ENCODE measurements at regions of chr1 and their contacts with region 1.

Region 1: DNA sequence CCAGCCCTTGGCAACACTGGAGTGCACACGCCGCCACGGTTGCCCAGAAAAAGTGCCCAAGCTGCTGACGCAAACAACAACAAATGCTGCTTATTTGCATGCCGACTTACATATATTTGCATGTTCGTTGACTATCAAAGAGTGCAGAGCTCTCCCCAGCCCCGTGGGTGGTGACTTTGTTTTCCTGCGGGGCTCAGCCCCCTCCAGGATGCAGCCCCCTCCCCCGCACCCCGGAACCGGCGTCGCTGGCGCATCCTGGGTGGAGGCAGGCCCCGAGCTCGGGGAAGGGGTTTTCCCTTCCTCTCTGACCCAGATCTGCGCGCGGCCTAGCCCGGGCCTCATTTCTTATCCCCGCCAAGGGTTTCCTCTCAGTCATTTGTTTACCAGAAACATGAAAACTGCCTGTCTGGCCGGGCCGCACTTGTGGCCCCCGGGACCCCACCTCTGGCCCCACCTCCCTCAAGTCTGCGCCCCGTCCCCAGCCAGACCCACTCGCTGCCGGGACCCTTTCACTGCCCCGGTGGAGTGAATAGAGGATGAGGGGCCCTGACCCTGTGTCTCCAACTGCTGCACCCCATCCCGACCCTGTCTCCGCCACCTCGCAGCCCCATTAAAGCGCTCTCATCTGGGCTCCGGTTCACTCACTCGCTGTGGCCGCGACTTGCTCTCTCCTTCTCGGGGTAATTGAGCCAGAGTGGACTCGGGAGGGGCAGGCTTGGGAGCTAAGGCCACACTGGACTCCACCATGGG is 5.5 kb downstream of the TNFRSF25 start:
- DNase-seq: peak; percentile 90
- H3K4me3 Mint-ChIP-seq: peak overlapping the region; percentile 74
- H3K27ac Mint-ChIP-seq: peak overlapping the region; percentile 92
- H3K4me1 Mint-ChIP-seq: peaks cover 51% of the 10 kb centered on the region
- H3K27me3 Mint-ChIP-seq: peaks cover 19% of the 10 kb centered on the region

Region 2: GRCh38 chr1:6059866-6060265 is 400.6 kb before region 1 on chr1:
- CTCF ChIA-PET with region 1: no interaction called
- POLR2A ChIA-PET with region 1: no interaction called
- DNase-seq: no peak
- H3K4me3 Mint-ChIP-seq: no peak overlapping the region
- H3K27ac Mint-ChIP-seq: no peak overlapping the region
- H3K4me1 Mint-ChIP-seq: peaks cover 2% of the 10 kb centered on the region
- H3K27me3 Mint-ChIP-seq: no peaks in the 10 kb centered on the region

Region 3: GRCh38 chr1:6300342-6301048 is 160.0 kb before region 1 on chr1:
- CTCF ChIA-PET with region 1: no interaction called
- POLR2A ChIA-PET with region 1: no interaction called
- DNase-seq: no peak
- H3K4me3 Mint-ChIP-seq: no peak overlapping the region
- H3K27ac Mint-ChIP-seq: no peak overlapping the region
- H3K4me1 Mint-ChIP-seq: no peaks in the 10 kb centered on the region
- H3K27me3 Mint-ChIP-seq: no peaks in the 10 kb centered on the region

Region 4: DNA sequence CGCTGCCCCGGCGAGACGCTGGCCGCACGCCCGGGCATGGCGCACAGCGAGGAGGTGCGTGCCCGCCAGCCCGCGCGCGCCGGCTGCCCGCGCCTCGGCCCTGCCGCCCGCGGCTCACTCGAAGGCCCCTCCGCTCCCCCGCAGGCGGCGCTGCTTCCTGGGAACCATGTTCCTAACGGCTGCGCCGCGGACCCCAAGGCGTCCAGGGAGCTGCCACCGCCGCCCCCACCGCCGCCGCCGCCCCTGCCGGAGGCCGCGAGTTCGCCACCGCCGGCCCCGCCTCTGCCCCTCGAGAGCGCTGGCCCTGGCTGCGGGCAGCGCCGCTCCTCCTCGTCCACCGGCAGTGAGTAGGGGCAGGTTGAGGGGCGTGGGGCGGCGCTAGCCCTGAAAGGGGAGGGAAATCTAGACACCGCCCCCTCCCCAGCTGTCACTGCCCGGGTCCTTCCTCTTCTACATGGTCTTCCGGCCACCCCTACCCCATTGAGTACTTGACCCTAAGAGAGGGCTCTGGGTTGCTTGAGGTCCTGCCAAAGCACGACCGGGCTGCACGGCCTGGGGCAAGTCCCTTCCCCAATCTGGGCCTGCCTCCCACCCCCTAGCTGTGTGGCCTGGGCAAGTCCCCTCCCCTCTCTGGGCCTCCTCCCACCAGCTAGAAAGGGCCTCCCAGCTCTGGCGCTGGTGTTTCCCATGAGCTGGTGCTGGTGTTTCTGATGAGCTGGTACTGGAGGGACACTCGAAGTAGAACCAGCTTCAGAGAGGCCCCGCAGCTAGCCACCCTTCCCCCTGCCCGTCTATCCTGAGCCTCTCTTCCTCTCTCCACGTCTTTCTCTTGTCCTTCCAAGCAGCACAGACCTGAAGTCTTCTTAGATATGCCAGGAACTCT is 11.5 kb before region 1 on chr1:
- CTCF ChIA-PET with region 1: interaction called, 6 read pairs
- POLR2A ChIA-PET with region 1: interaction called, 15 read pairs
- DNase-seq: no peak
- H3K4me3 Mint-ChIP-seq: no peak overlapping the region
- H3K27ac Mint-ChIP-seq: no peak overlapping the region
- H3K4me1 Mint-ChIP-seq: peaks cover 14% of the 10 kb centered on the region
- H3K27me3 Mint-ChIP-seq: peaks cover 61% of the 10 kb centered on the region

Measured in activated CD4-positive, alpha-beta memory T cell treated with anti-CD3 and anti-CD28 coated beads, Interleukin-2, amount 10 ng/mL, durations not matched to agents 7 days and 5 days (primary cell).